CD4-positive, alpha-beta T cell (primary cell): ENCODE measurements at regions of chr11 and their contacts with region 1.

Region 1: DNA sequence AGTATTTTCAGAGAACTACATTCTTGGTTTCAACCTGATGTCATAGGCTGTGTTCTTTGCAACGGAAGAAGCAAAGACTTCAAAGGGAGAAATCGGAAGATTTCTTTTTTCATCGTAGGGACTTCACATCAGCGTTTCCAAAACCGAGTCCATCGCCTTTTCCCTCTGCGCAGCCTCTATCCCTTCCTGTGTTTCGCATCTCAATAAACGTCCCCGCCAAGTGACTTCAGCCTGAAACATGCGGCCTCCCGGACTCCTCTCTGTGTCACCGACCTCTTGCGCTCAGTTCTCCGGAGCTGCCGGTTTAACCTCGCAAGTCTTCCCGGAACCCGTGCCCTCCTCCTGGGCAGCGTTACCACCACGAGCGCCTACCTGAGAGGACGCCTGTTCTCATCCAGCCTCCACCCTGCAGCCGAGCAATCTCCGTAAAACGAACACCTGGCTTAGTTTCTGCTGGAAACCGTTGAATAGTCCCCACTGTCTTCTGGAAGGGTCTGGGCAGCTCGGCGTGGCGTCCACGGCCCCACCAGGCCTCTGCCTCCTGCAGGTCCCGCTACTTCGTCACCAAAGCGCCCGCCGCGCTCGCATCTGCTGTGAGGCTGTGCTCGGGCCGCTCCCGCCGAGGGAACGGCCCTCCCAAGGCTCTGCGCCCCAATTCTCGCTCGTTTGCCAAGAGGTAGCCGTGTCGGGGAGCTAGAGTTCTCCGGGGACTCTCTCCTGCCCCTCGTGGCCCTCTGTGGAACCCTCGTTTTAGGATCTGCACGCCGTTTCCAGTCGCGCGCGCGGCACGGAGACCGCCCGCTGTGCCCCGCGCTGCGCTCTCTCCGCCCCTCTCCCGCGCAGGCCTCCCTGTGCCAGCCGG is at the start of gene GLB1L3:
- DNase-seq: peak; percentile 62 to 90 (median 74)
- ATAC-seq: peak; percentile 93
- H3K4me3 ChIP-seq: peak within 1 kb of the TSS; percentile 91
- H3K4me3 Mint-ChIP-seq: peak within 1 kb of the TSS; percentile 92
- H3K27ac ChIP-seq: peak within 1 kb of the TSS; percentile 50 to 52
- H3K27ac Mint-ChIP-seq: peak within 1 kb of the TSS; percentile 83
- H3K4me1 ChIP-seq: peaks cover 33% of the 10 kb centered on the region
- H3K4me1 Mint-ChIP-seq: peaks cover 55% of the 10 kb centered on the region
- H3K27me3 ChIP-seq: peaks cover 6% of the 10 kb centered on the region in 2 experiments
- H3K27me3 Mint-ChIP-seq: peaks cover 3% of the 10 kb centered on the region
- CTCF ChIP-seq: peak; percentile 76
- total RNA-seq, gene GLB1L3: 1.3 to 1.5 TPM

Region 2: GRCh38 chr11:132692891-132693290 is 1582.9 kb before region 1 on chr11:
- CTCF ChIA-PET with region 1: no interaction called
- POLR2A ChIA-PET with region 1: no interaction called
- intact Hi-C with region 1: no loop called
- DNase-seq: no peak
- ATAC-seq: no peak
- H3K4me3 ChIP-seq: no peak overlapping the region
- H3K4me3 Mint-ChIP-seq: no peak overlapping the region
- H3K27ac ChIP-seq: no peak overlapping the region
- H3K27ac Mint-ChIP-seq: no peak overlapping the region
- H3K4me1 ChIP-seq: no peaks in the 10 kb centered on the region
- H3K4me1 Mint-ChIP-seq: no peaks in the 10 kb centered on the region
- H3K27me3 ChIP-seq: no peaks in the 10 kb centered on the region
- H3K27me3 Mint-ChIP-seq: no peaks in the 10 kb centered on the region
- CTCF ChIP-seq: no peak

Region 3: GRCh38 chr11:134207538-134208239 is 68.1 kb before region 1 on chr11:
- CTCF ChIA-PET with region 1: interaction called, 11 read pairs
- POLR2A ChIA-PET with region 1: interaction called, 5 read pairs
- intact Hi-C with region 1: loop called (anchors 2 to 5 kb)
- DNase-seq: peak; percentile 42 to 75 (median 56)
- ATAC-seq: peak; percentile 61
- H3K4me3 ChIP-seq: no peak overlapping the region
- H3K4me3 Mint-ChIP-seq: no peak overlapping the region
- H3K27ac ChIP-seq: no peak overlapping the region
- H3K27ac Mint-ChIP-seq: no peak overlapping the region
- H3K4me1 ChIP-seq: no peaks in the 10 kb centered on the region
- H3K4me1 Mint-ChIP-seq: no peaks in the 10 kb centered on the region
- H3K27me3 ChIP-seq: no peaks in the 10 kb centered on the region
- H3K27me3 Mint-ChIP-seq: no peaks in the 10 kb centered on the region
- CTCF ChIP-seq: peak; percentile 93

Region 4: DNA sequence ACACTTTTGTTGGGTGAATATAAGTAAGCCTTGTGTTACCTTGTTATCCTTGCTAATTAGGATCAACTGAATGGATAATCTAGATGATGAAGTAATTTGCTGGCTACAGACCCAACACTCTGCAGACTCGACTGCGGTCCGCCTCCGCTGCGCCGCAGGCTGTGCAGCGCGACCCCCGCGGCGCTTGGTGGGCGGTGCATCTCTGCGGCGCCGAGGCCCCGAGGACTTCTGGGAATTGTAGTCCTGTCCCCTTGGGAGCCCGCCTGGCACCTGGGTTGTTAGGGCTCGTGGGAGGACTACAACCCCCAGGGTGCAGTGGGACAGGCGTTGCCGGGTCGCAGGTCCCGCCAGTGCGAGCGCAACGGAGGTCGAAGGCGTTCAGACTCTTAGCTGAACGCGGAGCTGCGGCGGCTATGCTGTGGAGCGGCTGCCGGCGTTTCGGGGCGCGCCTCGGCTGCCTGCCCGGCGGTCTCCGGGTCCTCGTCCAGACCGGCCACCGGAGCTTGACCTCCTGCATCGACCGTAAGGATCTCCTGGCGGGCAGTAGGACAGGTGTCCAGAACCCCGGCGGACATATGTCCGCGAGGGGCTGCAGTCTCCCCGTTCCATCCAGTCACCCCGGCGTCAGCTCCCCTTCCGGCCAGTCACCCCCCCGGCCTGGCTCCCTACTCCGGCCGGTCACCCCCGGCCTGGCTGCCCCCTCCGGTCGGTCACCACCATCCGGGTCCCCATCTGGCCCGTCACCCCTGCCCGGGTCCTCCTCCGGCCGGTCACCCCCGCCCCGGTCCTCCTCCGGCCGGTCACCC is 22.4 kb before region 1 on chr11 and contains the starts of genes ACAD8 and THYN1:
- CTCF ChIA-PET with region 1: interaction called, 18 read pairs
- POLR2A ChIA-PET with region 1: interaction called, 44 read pairs
- intact Hi-C with region 1: loop called in 1 of 2 experiments (anchors 1 kb)
- DNase-seq: peak; percentile 90 to 98 (median 94)
- ATAC-seq: peak; percentile 99
- H3K4me3 ChIP-seq: peak within 1 kb of the TSS; percentile 84
- H3K4me3 Mint-ChIP-seq: peak within 1 kb of the TSS; percentile 94
- H3K27ac ChIP-seq: peak within 1 kb of the TSS in 1 of 2 donors; percentile 51
- H3K27ac Mint-ChIP-seq: peak within 1 kb of the TSS; percentile 69
- H3K4me1 ChIP-seq: peaks cover 19% of the 10 kb centered on the region
- H3K4me1 Mint-ChIP-seq: peaks cover 40% of the 10 kb centered on the region
- H3K27me3 ChIP-seq: no peaks in the 10 kb centered on the region
- H3K27me3 Mint-ChIP-seq: no peaks in the 10 kb centered on the region
- CTCF ChIP-seq: peak; percentile 36
- total RNA-seq, gene ACAD8: 15.0 to 16.3 TPM
- total RNA-seq, gene THYN1: 25.7 to 26.0 TPM

Region 5: DNA sequence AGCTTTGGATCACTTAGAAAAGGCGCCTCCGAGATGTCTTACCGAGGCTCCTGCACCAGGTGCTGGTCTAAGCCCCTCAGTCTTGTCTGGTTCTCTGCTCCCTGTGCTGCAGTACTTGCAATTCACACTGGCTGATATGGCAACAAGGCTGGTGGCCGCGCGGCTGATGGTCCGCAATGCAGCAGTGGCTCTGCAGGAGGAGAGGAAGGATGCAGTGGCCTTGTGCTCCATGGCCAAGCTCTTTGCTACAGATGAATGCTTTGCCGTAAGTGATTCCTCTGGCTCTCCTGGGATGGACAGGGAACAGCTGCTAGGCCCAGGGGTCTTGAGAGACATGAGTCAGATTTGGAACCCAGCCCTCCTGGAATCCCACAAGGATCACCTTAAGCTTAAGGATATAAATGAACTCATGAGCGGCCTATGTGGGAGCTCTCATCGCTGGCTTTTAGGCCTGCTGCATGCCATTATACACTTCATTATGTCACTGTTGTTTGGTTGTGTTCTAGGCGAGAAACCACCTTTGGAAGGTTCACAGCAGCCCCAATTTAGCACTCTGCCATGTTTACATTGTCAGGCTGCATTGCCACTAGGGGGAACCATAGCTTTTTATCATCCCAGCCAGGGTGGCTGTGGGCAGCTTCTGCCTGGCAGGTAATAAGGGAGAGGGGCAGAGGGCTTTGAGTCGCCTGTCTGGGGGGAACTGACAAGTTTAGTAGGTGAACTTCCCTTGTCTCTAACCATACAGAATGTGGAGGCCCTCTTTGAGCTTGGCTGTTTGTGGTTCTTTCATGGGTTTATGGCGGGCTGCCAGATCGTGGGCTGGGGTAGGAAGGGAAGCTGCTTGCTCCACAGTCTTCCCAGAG is 13.9 kb before region 1 on chr11:
- CTCF ChIA-PET with region 1: interaction called, 23 read pairs
- POLR2A ChIA-PET with region 1: interaction called, 7 read pairs
- intact Hi-C with region 1: no loop called
- DNase-seq: peak in 10 of 14 experiments; percentile 12 to 69 (median 24)
- ATAC-seq: peak; percentile 81
- H3K4me3 ChIP-seq: no peak overlapping the region
- H3K4me3 Mint-ChIP-seq: no peak overlapping the region
- H3K27ac ChIP-seq: no peak overlapping the region
- H3K27ac Mint-ChIP-seq: no peak overlapping the region
- H3K4me1 ChIP-seq: no peaks in the 10 kb centered on the region
- H3K4me1 Mint-ChIP-seq: peaks cover 7% of the 10 kb centered on the region
- H3K27me3 ChIP-seq: no peaks in the 10 kb centered on the region
- H3K27me3 Mint-ChIP-seq: no peaks in the 10 kb centered on the region
- CTCF ChIP-seq: peak; percentile 61

Region 6: GRCh38 chr11:134331354-134332188 is 55.8 kb after region 1 on chr11 and contains the start of gene GLB1L2:
- CTCF ChIA-PET with region 1: interaction called, 12 read pairs
- POLR2A ChIA-PET with region 1: interaction called, 5 read pairs
- intact Hi-C with region 1: loop called (anchors 2 to 5 kb)
- DNase-seq: peak; percentile 65 to 93 (median 77)
- ATAC-seq: peak; percentile 91
- H3K4me3 ChIP-seq: peak within 1 kb of the TSS; percentile 80
- H3K4me3 Mint-ChIP-seq: peak within 1 kb of the TSS; percentile 93
- H3K27ac ChIP-seq: no peak within 1 kb of the TSS
- H3K27ac Mint-ChIP-seq: no peak within 1 kb of the TSS
- H3K4me1 ChIP-seq: peaks cover 22% of the 10 kb centered on the region
- H3K4me1 Mint-ChIP-seq: peaks cover 19% of the 10 kb centered on the region
- H3K27me3 ChIP-seq: peaks cover 0 to 4% of the 10 kb centered on the region in 2 experiments
- H3K27me3 Mint-ChIP-seq: peaks cover 36% of the 10 kb centered on the region
- CTCF ChIP-seq: no peak
- total RNA-seq, gene GLB1L2: 0.59 to 0.63 TPM